ENCODE measurements at regions of chr1 and their contacts with region 1.

Region 1: GRCh38 chr1:52697795-52698674 is at the start of gene COA7:
- DNase-seq: peak; percentile 73 to 85
- ATAC-seq: peak; percentile 71 to 76
- H3K4me3 ChIP-seq: peak within 1 kb of the TSS; percentile 73 to 96 (median 90)
- H3K27ac ChIP-seq: peak within 1 kb of the TSS; percentile 93 to 96 (median 95)
- H3K4me1 ChIP-seq: peaks cover 24 to 26% of the 10 kb centered on the region in 2 donors
- H3K27me3 ChIP-seq: no peaks in the 10 kb centered on the region
- CTCF ChIP-seq: peak in 1 of 5 experiments; percentile 18
- POLR2A ChIP-seq: peak; percentile 47 to 59
- total RNA-seq, gene COA7: 18.7 to 22.3 (median 20.1) TPM

Region 2: GRCh38 chr1:52426371-52426770 is 271.7 kb before region 1 on chr1:
- in situ Hi-C with region 1: loop called (anchors 25 kb)
- intact Hi-C with region 1: no loop called
- DNase-seq: no peak
- ATAC-seq: no peak
- H3K4me3 ChIP-seq: no peak overlapping the region
- H3K27ac ChIP-seq: no peak overlapping the region
- H3K4me1 ChIP-seq: no peaks in the 10 kb centered on the region
- H3K27me3 ChIP-seq: no peaks in the 10 kb centered on the region
- CTCF ChIP-seq: no peak
- POLR2A ChIP-seq: no peak

Region 3: GRCh38 chr1:52739699-52740467 is 41.8 kb after region 1 on chr1:
- in situ Hi-C with region 1: no loop called
- intact Hi-C with region 1: no loop called
- DNase-seq: peak; percentile 35 to 51
- ATAC-seq: peak; percentile 75 to 79
- H3K4me3 ChIP-seq: no peak overlapping the region
- H3K27ac ChIP-seq: peak overlapping the region; percentile 82 to 91 (median 89)
- H3K4me1 ChIP-seq: peaks cover 50 to 54% of the 10 kb centered on the region in 2 donors
- H3K27me3 ChIP-seq: no peaks in the 10 kb centered on the region
- CTCF ChIP-seq: no peak
- POLR2A ChIP-seq: no peak

Measured in gastrocnemius medialis (tissue), 4 donors.